ENCODE measurements at regions of chr12 and their contacts with region 1.

Region 1: GRCh38 chr12:48183091-48183875 is at the start of gene CCDC184:
- DNase-seq: peak; percentile 85
- H3K4me3 Mint-ChIP-seq: peak within 1 kb of the TSS; percentile 87
- H3K27ac Mint-ChIP-seq: peak within 1 kb of the TSS; percentile 60
- H3K4me1 Mint-ChIP-seq: peaks cover 17% of the 10 kb centered on the region
- H3K27me3 Mint-ChIP-seq: peaks cover 60% of the 10 kb centered on the region
- total RNA-seq, gene CCDC184: 0.17 to 0.22 TPM

Region 2: GRCh38 chr12:48199774-48200221 is 16.5 kb after region 1 on chr12:
- CTCF ChIA-PET with region 1: interaction called, 12 read pairs
- POLR2A ChIA-PET with region 1: no interaction called
- DNase-seq: no peak
- H3K4me3 Mint-ChIP-seq: peak overlapping the region; percentile 77
- H3K27ac Mint-ChIP-seq: peak overlapping the region; percentile 90
- H3K4me1 Mint-ChIP-seq: peaks cover 45% of the 10 kb centered on the region
- H3K27me3 Mint-ChIP-seq: peaks cover 6% of the 10 kb centered on the region

Region 3: GRCh38 chr12:48512855-48513254 is 329.6 kb after region 1 on chr12:
- CTCF ChIA-PET with region 1: no interaction called
- POLR2A ChIA-PET with region 1: no interaction called
- DNase-seq: no peak
- H3K4me3 Mint-ChIP-seq: no peak overlapping the region
- H3K27ac Mint-ChIP-seq: no peak overlapping the region
- H3K4me1 Mint-ChIP-seq: no peaks in the 10 kb centered on the region
- H3K27me3 Mint-ChIP-seq: peaks cover 2% of the 10 kb centered on the region